Panc1 (cell line): ENCODE measurements at regions of chr19 and their contacts with region 1.

Region 1: DNA sequence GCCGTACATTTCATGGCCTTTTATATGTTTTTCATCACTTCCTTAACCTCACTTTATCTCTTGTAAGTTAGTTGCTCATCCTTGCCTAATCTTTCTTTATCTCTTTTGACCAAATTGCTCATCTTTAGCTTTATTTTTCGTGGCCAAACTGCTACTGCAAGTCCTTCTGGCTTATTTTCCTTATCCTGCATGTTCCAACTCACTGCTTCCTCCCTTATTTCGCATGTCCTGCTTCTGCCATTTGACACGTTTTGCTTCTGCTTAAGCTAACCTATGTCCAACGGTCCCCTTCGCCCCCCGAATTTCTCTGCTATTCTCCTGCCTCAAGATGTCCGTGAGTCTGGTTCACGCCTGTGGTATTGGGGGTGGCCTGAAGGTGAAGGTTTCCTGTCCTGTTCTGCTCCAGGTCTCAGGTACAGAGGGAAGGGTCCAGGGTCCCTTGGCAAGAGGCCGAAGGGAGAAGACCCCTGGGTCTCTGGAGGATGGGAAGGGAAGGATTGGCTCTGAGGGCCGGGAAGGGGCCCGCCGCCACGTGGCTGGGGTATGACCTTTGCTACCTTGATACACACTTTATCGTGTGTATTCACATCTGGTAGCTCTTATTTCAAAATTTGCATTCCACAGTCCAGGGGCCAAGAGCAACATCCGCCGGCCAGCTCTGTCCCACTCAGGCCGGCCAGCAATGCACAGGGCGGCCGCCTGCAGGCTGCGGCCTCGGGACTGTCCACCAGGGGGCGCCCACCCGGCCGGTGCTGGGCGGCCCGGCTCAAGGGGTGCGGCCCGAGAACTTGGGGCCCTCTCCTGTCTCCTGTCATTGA is 2.9 kb upstream of the C19orf85 start:
- DNase-seq: no peak
- ATAC-seq: peak; percentile 87
- H3K4me3 ChIP-seq: peak overlapping the region in 1 of 2 experiments; percentile 33; a peak in 1 of 4 replicates
- H3K27ac ChIP-seq: 0 out of 2 replicates have a peak overlapping the region, but pooled peaks have one; percentile 48
- H3K4me1 ChIP-seq: peaks cover 10% of the 10 kb centered on the region
- H3K27me3 ChIP-seq: no peaks in the 10 kb centered on the region
- CTCF ChIP-seq: peak; percentile 100

Region 2: DNA sequence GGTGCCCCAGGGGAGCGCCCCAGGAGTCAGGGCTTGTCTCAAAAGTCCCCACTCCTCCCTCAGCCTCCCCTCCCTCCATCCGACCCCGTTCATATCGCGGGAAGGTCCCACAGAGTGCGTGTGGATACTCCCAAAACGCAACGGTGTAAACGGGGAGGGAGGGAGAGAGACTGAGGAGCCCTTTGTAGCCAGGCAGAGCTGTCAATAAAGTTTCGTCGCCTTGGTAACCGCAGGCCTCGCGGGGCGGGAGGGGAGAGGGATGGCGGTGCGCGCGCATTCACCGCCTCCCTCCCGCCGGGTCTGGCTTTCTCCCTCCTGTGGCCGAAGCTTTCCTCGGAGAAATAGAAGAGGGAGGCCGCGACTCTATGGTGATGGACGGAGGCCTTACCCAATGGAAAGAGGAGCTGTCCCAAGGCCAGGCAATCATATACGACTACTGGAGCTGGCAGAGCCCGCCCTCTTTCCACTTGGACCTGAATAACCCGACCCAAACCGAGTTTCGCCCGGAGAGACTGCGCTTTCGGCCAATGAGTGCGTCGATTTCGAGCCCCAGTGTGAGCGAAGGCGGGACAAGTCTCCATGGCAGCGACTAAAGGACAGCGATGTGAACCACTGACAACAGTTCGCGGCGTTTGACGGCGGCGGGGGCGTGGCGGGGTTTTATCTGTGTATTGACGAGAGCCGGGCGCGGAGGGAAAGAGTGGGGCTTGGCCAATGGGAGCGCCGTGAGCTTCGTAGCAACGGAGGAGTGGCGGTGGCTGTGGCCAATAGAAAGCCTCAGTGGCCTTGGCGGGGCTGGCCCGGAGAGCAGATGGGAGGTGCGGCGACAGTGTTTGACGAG is 128.2 kb before region 1 on chr19 and contains the start of gene KMT5C:
- CTCF ChIA-PET with region 1: no interaction called
- POLR2A ChIA-PET with region 1: no interaction called
- in situ Hi-C with region 1: no loop called
- intact Hi-C with region 1: no loop called
- DNase-seq: peak; percentile 100
- ATAC-seq: peak; percentile 92
- H3K4me3 ChIP-seq: peak within 1 kb of the TSS; percentile 73 to 87
- H3K27ac ChIP-seq: peak within 1 kb of the TSS; percentile 98
- H3K4me1 ChIP-seq: peaks cover 16% of the 10 kb centered on the region
- H3K27me3 ChIP-seq: no peaks in the 10 kb centered on the region
- CTCF ChIP-seq: no peak
- total RNA-seq, gene KMT5C: 30.6 TPM

Region 3: GRCh38 chr19:55426042-55426441 is 41.4 kb before region 1 on chr19:
- CTCF ChIA-PET with region 1: no interaction called
- POLR2A ChIA-PET with region 1: no interaction called
- in situ Hi-C with region 1: no loop called
- intact Hi-C with region 1: no loop called
- DNase-seq: no peak
- ATAC-seq: no peak
- H3K4me3 ChIP-seq: no peak overlapping the region
- H3K27ac ChIP-seq: no peak overlapping the region
- H3K4me1 ChIP-seq: no peaks in the 10 kb centered on the region
- H3K27me3 ChIP-seq: no peaks in the 10 kb centered on the region
- CTCF ChIP-seq: no peak

Region 4: GRCh38 chr19:55503502-55504251 is 36.2 kb after region 1 on chr19:
- CTCF ChIA-PET with region 1: interaction called, 31 read pairs
- POLR2A ChIA-PET with region 1: no interaction called
- in situ Hi-C with region 1: no loop called
- intact Hi-C with region 1: no loop called
- DNase-seq: peak; percentile 83
- ATAC-seq: peak; percentile 97
- H3K4me3 ChIP-seq: peak overlapping the region; percentile 39 to 59
- H3K27ac ChIP-seq: peak overlapping the region; percentile 50
- H3K4me1 ChIP-seq: no peaks in the 10 kb centered on the region
- H3K27me3 ChIP-seq: no peaks in the 10 kb centered on the region
- CTCF ChIP-seq: peak; percentile 99